PC-3 (cell line): ENCODE measurements at regions of chr17 and their contacts with region 1.

Region 1: GRCh38 chr17:9606453-9606852 is 30.0 kb downstream of the CFAP52 start:
- DNase-seq: no peak
- ATAC-seq: no peak
- H3K4me3 ChIP-seq: no peak overlapping the region
- H3K27ac ChIP-seq: no peak overlapping the region
- H3K4me1 ChIP-seq: no peaks in the 10 kb centered on the region
- H3K27me3 ChIP-seq: no peaks in the 10 kb centered on the region
- CTCF ChIP-seq: no peak

Region 2: GRCh38 chr17:9594065-9594464 is 12.4 kb before region 1 on chr17:
- CTCF ChIA-PET with region 1: interaction called, 14 read pairs
- POLR2A ChIA-PET with region 1: no interaction called
- intact Hi-C with region 1: no loop called
- DNase-seq: no peak
- ATAC-seq: no peak
- H3K4me3 ChIP-seq: no peak overlapping the region
- H3K27ac ChIP-seq: no peak overlapping the region
- H3K4me1 ChIP-seq: no peaks in the 10 kb centered on the region
- H3K27me3 ChIP-seq: no peaks in the 10 kb centered on the region
- CTCF ChIP-seq: no peak